AG04449 (cell line): ENCODE measurements at regions of chr19 and their contacts with region 1.

Region 1: DNA sequence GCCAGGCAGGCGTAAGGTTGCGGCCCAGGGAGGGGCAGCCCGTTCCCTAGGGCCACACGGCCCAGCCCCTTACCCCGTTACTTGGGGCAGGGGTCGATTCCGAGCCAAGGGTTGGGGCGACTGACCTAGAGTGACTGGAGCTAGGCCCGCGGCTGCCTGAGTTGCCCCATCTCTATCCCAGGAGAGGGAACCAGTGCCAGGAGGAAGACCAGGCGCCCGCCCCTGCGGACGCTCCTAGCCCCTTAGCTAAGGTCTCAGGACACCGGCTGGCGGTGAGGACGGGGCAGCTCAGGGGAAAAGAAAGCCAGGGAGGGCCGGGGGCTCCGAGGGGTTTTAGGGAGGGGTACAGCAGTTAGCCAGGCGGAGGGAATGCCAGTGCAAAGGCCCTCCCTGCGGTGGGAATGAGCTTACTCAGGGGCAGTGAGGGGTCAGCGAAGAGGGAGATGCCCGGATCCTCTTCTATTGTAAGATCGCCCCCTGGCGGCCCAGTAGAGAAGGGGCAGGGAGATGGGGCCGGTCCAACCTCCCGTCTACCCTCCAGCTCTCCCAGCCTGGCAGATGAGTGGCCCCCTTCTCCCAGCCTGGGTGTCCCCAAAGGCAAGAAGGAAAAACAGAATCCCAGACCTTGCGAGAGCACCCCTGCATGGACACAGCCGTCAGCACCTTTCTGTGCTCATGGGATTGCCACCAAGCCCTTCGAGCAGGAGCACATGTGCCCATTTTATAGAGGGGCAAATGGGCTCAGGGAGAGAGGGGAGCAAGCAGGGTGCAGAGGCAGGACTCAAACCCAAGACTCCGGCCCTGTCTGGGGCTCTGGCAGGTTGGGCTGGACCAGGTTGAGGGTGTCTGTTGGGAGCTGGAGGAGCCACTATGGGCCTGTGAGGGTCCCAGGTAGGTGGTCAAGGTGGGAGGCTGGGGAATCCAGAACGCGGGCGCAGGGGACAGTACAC is 16.3 kb downstream of the CILP2 start:
- DNase-seq: no peak
- H3K4me3 ChIP-seq: no peak overlapping the region
- CTCF ChIP-seq: peak; percentile 73

Region 2: GRCh38 chr19:19475849-19476828 is 78.2 kb before region 1 on chr19:
- CTCF ChIA-PET with region 1: no interaction called
- POLR2A ChIA-PET with region 1: no interaction called
- DNase-seq: no peak
- H3K4me3 ChIP-seq: no peak overlapping the region
- CTCF ChIP-seq: peak; percentile 35

Region 3: GRCh38 chr19:19540715-19541440 is 13.5 kb before region 1 on chr19:
- CTCF ChIA-PET with region 1: interaction called, 29 read pairs
- POLR2A ChIA-PET with region 1: no interaction called
- DNase-seq: no peak
- H3K4me3 ChIP-seq: peak overlapping the region; percentile 0; the same call in 1 of the 2 replicates
- CTCF ChIP-seq: no peak

Region 4: GRCh38 chr19:19578252-19578651 is 23.9 kb after region 1 on chr19:
- CTCF ChIA-PET with region 1: interaction called, 15 read pairs
- POLR2A ChIA-PET with region 1: no interaction called
- DNase-seq: no peak
- H3K4me3 ChIP-seq: no peak overlapping the region
- CTCF ChIP-seq: no peak

Region 5: DNA sequence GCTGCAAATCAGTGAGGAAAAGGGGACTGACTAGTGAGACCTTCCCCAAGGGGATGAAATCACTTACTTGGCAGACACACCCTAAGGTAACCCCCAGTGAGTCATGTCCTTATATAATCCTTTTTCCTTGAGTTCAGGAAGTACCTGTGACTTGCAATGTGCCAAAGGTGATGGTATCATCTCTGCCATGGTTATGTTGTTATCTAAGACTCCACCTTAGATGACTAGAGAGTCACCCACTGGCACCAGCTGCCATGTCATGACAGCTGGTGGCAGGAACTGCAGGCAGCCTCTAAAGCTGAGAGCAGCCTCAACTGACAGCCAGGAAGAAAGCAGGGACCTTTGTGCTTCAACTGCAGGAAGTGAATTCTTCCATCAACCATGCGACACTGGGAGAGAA is 51.7 kb after region 1 on chr19:
- CTCF ChIA-PET with region 1: interaction called, 11 read pairs
- POLR2A ChIA-PET with region 1: no interaction called
- DNase-seq: no peak
- H3K4me3 ChIP-seq: no peak overlapping the region
- CTCF ChIP-seq: no peak

Region 6: DNA sequence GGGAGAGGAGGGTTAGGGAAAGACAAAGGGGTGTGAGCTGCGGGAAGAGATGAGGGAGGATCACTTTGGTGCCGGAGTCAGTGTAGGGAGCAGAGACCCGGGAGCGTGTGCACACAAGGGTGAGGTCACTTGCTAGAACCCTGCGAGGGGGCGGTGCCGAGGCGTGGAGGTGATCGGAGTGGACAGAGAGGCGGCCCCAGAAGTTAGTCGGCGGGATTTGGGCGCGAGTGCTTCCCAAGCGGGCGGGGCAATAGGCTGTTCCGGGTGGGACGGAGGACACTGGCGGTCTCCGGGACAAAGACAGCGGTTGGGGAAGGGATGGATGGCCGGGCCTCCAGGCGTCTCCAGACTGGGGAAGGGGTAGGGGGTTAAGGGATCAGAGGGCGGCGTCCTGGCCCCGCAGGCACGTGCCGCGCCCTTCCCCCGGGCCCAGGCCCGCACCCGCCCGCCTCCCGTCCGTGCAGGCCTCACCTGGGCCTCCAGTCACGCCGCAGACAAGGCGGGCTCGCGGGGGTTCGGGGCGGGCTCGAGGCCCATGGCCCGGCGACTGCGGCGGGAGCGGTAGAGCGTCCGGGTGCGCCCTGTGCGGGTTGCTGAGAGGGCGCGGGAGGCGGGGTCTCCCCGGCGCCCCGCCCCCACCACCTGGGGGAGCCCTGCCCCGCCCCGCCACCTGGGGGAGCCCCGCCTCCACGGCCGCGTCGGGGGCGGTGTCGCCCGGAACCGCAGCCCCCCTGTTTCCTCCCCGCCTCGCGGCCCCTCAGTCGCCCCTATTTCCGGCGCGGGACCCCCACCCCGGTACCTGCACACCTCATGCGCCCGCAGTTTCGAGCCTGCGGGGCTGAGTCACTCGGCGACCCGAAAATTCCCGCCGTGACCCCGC is 73.5 kb after region 1 on chr19 and contains the start of gene LPAR2:
- CTCF ChIA-PET with region 1: interaction called, 10 read pairs
- POLR2A ChIA-PET with region 1: no interaction called
- DNase-seq: no peak
- H3K4me3 ChIP-seq: peak within 1 kb of the TSS; percentile 41
- CTCF ChIP-seq: no peak